ENCODE measurements at regions of chr1 and their contacts with region 1.

Region 1: DNA sequence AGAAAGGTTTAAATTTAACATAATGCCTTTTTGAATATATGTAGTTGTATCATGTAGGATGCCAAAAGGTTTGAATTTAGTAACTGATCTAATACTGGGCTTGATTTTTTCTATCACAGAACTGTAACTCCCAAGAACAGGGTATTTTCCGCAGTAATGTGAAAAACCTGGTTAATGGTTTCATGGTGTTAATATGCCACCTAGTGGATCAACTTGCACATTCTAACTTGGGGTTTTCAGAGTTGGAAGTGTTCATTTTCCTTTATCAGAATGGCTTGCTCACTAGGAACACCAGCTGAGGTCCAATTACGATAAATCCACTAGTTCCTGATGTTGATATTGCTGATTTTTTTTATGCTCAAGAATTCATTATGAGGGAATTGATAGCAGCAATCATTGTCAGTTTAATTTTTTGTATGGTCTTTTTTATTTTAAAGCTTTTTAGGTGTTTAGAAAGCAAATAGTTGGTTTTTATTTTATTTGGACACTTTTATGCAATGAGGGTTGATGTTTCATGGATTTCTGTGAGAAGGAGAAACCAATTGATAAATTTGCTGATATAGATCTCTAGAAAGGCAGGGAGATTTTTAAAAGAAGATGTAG is 157.2 kb downstream of the PLA2G4A start:
- DNase-seq: no peak
- H3K4me3 ChIP-seq: no peak overlapping the region
- H3K27ac ChIP-seq: no peak overlapping the region
- H3K4me1 ChIP-seq: no peaks in the 10 kb centered on the region
- H3K27me3 ChIP-seq: no peaks in the 10 kb centered on the region
- CTCF ChIP-seq: peak; percentile 64 to 67

Region 2: DNA sequence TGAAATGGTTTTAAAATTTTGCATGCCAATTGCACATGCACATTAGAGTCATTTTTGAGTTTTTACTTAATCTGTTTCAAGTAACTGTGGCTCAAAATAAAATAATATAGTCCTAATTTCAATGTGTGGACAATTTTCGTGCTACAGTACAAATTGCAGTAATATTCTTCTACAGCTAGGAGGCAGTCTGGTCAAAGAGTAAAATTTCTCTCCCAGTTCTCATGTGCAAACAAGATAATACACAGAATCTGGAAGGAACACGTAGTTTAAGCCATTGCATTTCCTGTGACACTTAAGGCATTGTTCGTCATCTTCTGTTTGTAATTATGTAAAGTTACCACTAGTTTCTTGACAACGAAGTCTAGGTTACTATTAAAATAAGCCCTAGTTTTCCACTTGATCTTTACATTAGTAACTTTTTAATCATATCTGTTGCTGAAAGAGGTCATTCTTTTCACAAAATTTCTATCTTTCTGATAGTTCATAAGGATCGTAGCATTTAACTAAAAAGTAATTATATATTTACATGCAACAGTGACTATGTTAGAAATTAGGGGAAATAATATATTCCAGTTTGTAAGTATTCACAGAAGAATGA is 581.4 kb before region 1 on chr1:
- intact Hi-C with region 1: loop called (anchors 10 kb)
- DNase-seq: no peak
- H3K4me3 ChIP-seq: no peak overlapping the region
- H3K27ac ChIP-seq: no peak overlapping the region
- H3K4me1 ChIP-seq: no peaks in the 10 kb centered on the region
- H3K27me3 ChIP-seq: no peaks in the 10 kb centered on the region
- CTCF ChIP-seq: peak; percentile 50 to 51

Region 3: DNA sequence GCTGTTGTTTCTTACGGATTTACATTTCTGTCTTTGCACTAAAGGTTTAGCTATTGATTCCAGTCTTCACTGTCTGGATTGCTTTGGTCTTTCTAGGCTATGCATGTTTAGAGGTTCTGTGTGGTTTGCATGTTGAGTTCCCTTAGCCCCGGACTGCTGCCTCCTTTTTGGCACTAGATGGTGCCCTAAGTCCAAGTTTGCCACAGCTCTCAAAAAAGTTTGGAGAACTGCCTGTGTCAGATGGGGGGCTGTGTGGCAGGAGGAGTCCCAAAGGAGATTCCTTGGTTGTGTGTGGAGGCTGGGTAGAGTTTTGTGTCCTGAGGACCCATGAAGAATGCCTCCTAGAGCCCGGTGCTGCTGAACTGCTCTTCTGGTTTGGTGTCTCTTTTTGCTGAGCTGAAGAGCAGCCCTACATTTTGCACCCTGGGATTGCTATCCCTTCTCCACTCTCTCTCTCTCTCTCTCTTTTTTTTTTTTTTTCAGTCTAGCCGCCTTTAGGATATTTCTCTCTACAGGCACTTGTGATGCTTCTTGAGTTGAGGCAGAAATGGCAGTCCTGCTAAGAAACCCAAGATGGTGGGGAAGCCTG is 380.1 kb before region 1 on chr1:
- intact Hi-C with region 1: loop called (anchors 5 kb)
- DNase-seq: peak in 1 of 2 donors; percentile 32
- H3K4me3 ChIP-seq: no peak overlapping the region
- H3K27ac ChIP-seq: no peak overlapping the region
- H3K4me1 ChIP-seq: peaks cover 0 to 4% (median 0%) of the 10 kb centered on the region in 4 donors
- H3K27me3 ChIP-seq: no peaks in the 10 kb centered on the region
- CTCF ChIP-seq: peak; percentile 25 to 42

Region 4: GRCh38 chr1:186904361-186904760 is 81.6 kb before region 1 on chr1:
- intact Hi-C with region 1: no loop called
- DNase-seq: no peak
- H3K4me3 ChIP-seq: no peak overlapping the region
- H3K27ac ChIP-seq: no peak overlapping the region
- H3K4me1 ChIP-seq: peaks cover 0 to 26% (median 0%) of the 10 kb centered on the region in 4 donors
- H3K27me3 ChIP-seq: no peaks in the 10 kb centered on the region
- CTCF ChIP-seq: no peak

Region 5: GRCh38 chr1:186930238-186930637 is 55.8 kb before region 1 on chr1:
- intact Hi-C with region 1: no loop called
- DNase-seq: no peak
- H3K4me3 ChIP-seq: no peak overlapping the region
- H3K27ac ChIP-seq: no peak overlapping the region
- H3K4me1 ChIP-seq: peaks cover 0 to 12% (median 2%) of the 10 kb centered on the region in 4 donors
- H3K27me3 ChIP-seq: no peaks in the 10 kb centered on the region
- CTCF ChIP-seq: no peak

Region 6: DNA sequence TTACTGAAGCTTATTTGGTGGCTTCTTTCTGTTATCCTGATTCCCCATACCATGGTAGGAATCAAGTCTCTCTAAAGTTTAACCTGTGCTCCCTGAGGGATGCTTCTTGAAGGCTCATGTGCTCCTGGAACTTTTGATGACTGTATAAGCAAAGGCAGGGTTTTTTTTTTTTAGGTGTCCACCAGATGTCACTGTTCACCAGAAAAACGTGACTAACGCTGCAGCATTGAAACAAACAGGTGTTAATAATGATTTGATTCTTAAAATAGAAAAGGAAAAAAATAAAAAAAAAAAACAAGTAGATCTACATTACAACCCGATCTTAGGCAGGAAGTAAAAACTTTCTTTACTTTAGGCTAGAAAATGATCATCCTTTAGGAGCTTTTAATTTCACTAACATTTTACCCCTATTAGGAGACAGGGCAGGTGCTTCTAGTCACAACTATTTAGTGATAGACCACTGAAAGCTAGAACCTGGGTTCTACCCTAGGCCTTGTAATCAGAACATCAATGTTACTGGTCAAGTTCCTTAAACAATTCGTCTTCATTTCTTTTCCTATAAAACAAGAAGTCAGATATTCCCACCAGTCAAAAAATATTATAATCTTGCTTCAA is 65.7 kb after region 1 on chr1:
- intact Hi-C with region 1: no loop called
- DNase-seq: no peak
- H3K4me3 ChIP-seq: no peak overlapping the region
- H3K27ac ChIP-seq: no peak overlapping the region
- H3K4me1 ChIP-seq: no peaks in the 10 kb centered on the region
- H3K27me3 ChIP-seq: no peaks in the 10 kb centered on the region
- CTCF ChIP-seq: peak in 1 of 2 experiments; percentile 18